ENCODE measurements at regions of chr9 and their contacts with region 1.

Region 1: DNA sequence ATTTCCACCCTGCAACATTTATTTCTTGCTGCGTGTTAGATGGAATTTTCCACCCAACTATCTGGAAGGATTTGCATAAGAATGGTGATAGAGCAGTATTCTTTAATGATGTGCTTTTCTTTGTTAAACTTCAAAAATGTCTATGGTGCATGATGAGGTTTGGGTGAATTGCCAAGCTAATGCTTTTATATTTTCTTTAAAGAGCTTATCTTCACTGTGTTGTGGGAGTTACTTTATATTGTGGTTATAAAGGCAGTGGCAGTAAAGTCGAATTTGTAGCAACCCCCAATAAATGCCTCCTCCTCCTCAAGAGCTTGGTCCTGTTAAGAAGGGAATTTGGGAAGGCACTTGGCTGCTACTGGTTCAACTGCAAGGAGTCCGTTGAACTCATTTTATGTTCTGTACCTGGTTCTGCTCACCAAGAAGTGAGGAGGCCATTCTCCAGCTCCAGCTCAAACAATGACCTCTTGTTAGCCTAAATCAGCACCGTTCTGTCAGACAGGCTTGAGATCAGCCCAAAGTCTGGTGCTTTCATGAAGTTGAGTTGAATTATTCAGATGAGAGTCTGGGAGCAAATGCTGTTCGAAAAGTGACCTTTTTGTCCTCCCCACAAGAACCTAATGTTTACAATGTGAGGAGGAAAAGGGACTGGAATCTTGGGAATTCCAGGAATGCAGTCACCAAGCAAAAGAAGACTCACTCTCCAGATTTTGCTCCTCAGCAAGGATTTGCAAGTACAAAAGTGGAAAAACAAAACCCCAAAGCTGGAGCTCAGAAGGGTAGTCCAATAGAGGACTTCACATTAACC is 217.0 kb downstream of the TMEM38B start:
- DNase-seq: no peak
- ATAC-seq: no peak
- H3K4me3 ChIP-seq: no peak overlapping the region
- H3K27ac ChIP-seq: no peak overlapping the region
- H3K4me1 ChIP-seq: peaks cover 0 to 6% (median 0%) of the 10 kb centered on the region in 12 donors
- H3K27me3 ChIP-seq: no peaks in the 10 kb centered on the region
- CTCF ChIP-seq: no peak
- POLR2A ChIP-seq: no peak

Region 2: DNA sequence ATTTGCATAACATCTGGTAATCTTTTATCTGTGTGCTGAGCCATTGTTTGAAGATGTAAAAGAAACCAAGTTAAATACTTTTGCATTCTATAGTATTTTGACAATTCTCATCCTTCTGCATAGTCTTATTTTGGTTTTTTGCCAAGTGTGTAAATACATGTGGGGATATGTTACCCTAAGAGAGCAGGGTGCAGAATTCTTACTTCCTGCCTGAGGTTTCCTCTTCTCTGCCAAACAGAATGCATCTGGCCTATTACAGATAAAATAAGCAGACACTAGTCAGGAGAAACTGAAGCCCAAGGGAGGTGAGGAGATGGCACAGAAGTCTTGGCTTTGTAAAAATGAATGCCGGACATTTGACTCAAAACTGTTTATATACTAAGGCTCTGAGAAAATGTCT is 245.2 kb after region 1 on chr9:
- intact Hi-C with region 1: no loop called
- DNase-seq: no peak
- ATAC-seq: no peak
- H3K4me3 ChIP-seq: no peak overlapping the region
- H3K27ac ChIP-seq: no peak overlapping the region
- H3K4me1 ChIP-seq: no peaks in the 10 kb centered on the region
- H3K27me3 ChIP-seq: no peaks in the 10 kb centered on the region
- CTCF ChIP-seq: no peak
- POLR2A ChIP-seq: no peak

Region 3: DNA sequence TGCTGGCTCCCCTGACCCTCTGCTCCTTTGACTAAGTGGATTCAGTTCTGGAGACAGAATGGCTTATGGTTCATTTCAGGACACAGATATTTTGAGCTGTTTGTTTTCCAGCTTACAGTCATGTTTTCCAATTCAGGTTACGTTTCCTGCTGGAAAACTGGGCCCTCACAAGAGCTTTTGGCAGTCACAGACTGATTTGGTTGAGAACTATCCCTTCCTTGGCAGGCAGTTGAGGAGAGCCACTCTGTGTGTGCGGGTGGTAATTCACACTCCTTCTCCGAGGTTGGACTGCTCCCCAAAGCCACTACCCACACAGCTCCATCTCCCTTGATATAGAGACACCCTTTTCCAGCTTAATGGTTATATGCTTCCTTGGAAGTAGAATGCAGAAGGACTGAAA is 317.6 kb after region 1 on chr9:
- intact Hi-C with region 1: loop called in 1 of 10 experiments (anchors 10 kb)
- DNase-seq: peak in 4 of 5 donors; percentile 39 to 68 (median 53)
- ATAC-seq: peak; percentile 90 to 95 (median 92)
- H3K4me3 ChIP-seq: no peak overlapping the region
- H3K27ac ChIP-seq: peak overlapping the region in 3 of 12 donors; percentile 8 to 33 (median 30)
- H3K4me1 ChIP-seq: peaks cover 0 to 18% (median 10%) of the 10 kb centered on the region in 12 donors
- H3K27me3 ChIP-seq: no peaks in the 10 kb centered on the region
- CTCF ChIP-seq: no peak
- POLR2A ChIP-seq: no peak